Psoas muscle (tissue), 8 donors: ENCODE measurements at regions of chr17 and their contacts with region 1.

Region 1: GRCh38 chr17:32941419-32942032 is 13.6 kb downstream of the TMEM98 start:
- DNase-seq: no peak
- ATAC-seq: no peak
- H3K4me3 ChIP-seq: no peak overlapping the region
- H3K27ac ChIP-seq: no peak overlapping the region
- H3K4me1 ChIP-seq: no peaks in the 10 kb centered on the region
- H3K27me3 ChIP-seq: peaks cover 0 to 10% (median 0%) of the 10 kb centered on the region in 3 donors
- CTCF ChIP-seq: peak; percentile 13

Region 2: DNA sequence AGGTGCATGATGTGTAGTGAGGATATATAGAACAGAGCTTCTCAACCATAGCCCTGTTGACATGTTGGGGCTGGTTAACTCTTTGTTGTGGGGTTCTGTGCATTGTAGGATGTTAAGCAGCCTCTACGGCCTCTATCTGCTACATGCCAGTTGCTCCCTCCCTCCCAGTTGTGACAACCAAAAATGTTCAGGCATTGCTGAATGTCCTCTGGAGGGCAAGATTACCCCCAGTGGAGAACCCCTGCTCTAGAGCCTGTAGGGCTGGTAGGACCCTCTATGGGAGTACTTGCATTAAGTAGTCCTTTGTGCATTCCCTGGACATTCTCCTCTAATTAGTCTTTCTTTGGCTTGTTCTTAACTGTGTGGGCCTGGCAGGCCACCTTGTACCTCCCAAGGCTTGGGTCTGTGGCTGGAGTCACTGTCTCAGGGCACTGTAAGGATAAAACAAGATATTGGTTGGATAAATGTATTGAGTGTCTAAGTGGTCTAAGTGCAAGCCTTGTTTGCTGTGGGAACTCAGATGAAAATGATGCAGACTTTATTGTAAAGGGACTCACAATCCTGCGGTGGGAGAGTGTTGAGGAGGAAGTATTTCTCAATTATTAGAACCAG is 44.8 kb before region 1 on chr17:
- intact Hi-C with region 1: loop called in 1 of 2 experiments (anchors 5 kb)
- DNase-seq: no peak
- ATAC-seq: no peak
- H3K4me3 ChIP-seq: no peak overlapping the region
- H3K27ac ChIP-seq: no peak overlapping the region
- H3K4me1 ChIP-seq: no peaks in the 10 kb centered on the region
- H3K27me3 ChIP-seq: no peaks in the 10 kb centered on the region
- CTCF ChIP-seq: no peak

Region 3: DNA sequence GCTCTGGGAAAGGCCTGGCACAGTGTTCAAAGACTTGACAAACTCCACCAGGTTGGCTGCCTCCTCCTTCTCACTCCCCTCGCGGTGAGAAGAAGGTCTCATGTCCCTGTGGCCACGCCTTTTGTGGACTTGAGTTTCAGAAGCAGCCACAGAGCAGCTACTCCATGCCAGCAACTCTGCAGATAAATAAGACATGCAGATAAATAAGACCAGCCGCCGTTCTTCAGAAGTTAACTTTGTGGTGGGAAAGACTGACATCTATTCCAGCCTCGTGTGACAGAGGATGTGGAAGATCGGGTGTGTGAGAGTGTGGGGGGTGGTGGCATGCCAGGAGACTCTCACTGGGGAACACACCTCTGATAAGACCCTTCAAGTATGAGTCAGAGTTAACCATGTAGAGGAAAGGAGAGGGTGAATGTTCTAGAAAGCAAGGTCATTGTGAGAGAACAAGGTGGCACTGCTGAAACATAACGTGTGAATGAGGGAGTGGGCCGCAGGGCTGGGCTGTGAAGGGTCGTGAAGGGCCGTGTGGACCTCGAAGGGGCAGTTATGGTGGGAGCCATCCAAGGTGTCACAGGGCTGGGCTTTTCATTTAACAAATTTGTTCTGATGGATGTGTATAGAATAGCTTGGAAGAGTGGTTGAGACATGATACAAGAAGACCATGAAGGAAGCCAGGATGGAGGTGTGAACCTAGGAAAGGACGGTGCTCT is 51.0 kb after region 1 on chr17:
- intact Hi-C with region 1: no loop called
- DNase-seq: no peak
- ATAC-seq: no peak
- H3K4me3 ChIP-seq: no peak overlapping the region
- H3K27ac ChIP-seq: no peak overlapping the region
- H3K4me1 ChIP-seq: no peaks in the 10 kb centered on the region
- H3K27me3 ChIP-seq: peaks cover 0 to 10% (median 10%) of the 10 kb centered on the region in 3 donors
- CTCF ChIP-seq: no peak

Region 4: DNA sequence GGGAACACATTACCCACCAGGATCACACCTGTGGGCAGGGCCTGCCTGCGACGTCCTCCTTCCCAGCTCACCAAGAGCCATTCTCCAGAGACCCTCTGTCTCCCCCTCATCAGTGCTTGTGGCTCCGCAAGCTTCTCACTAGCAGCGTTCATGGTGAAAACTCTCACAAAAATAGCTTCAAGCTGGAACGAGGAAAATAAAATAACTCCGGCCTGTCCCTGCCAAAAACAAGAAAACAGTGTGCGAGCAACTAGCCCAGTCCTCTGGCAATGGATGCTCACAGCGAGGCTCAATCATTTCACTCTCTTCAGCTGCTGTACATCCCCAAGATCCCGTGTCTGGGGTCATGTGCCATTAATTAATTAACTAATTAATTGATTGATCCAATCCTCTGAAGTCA is 68.1 kb after region 1 on chr17:
- intact Hi-C with region 1: loop called in 1 of 2 experiments (anchors 10 kb)
- DNase-seq: no peak
- ATAC-seq: no peak
- H3K4me3 ChIP-seq: no peak overlapping the region
- H3K27ac ChIP-seq: no peak overlapping the region
- H3K4me1 ChIP-seq: no peaks in the 10 kb centered on the region
- H3K27me3 ChIP-seq: peaks cover 0 to 3% (median 0%) of the 10 kb centered on the region in 3 donors
- CTCF ChIP-seq: no peak